B cell (primary cell): ENCODE measurements at regions of chr2 and their contacts with region 1.

Region 1: GRCh38 chr2:149597668-149598326 is 10.2 kb upstream of the MMADHC start:
- DNase-seq: peak; percentile 77
- ATAC-seq: peak; percentile 95
- H3K4me3 ChIP-seq: no peak overlapping the region
- H3K4me3 Mint-ChIP-seq: peak overlapping the region; percentile 24
- H3K27ac ChIP-seq: no peak overlapping the region
- H3K27ac Mint-ChIP-seq: no peak overlapping the region
- H3K4me1 ChIP-seq: peaks cover 4 to 5% of the 10 kb centered on the region in 2 donors
- H3K4me1 Mint-ChIP-seq: peaks cover 6% of the 10 kb centered on the region
- H3K27me3 ChIP-seq: peaks cover 0 to 5% (median 2%) of the 10 kb centered on the region in 4 experiments
- H3K27me3 Mint-ChIP-seq: peaks cover 22% of the 10 kb centered on the region
- CTCF ChIP-seq: peak; percentile 87

Region 2: GRCh38 chr2:149652526-149652925 is 54.7 kb after region 1 on chr2:
- CTCF ChIA-PET with region 1: no interaction called
- POLR2A ChIA-PET with region 1: no interaction called
- intact Hi-C with region 1: no loop called
- DNase-seq: no peak
- ATAC-seq: no peak
- H3K4me3 ChIP-seq: no peak overlapping the region
- H3K4me3 Mint-ChIP-seq: no peak overlapping the region
- H3K27ac ChIP-seq: no peak overlapping the region
- H3K27ac Mint-ChIP-seq: no peak overlapping the region
- H3K4me1 ChIP-seq: no peaks in the 10 kb centered on the region
- H3K4me1 Mint-ChIP-seq: no peaks in the 10 kb centered on the region
- H3K27me3 ChIP-seq: no peaks in the 10 kb centered on the region
- H3K27me3 Mint-ChIP-seq: no peaks in the 10 kb centered on the region
- CTCF ChIP-seq: no peak

Region 3: DNA sequence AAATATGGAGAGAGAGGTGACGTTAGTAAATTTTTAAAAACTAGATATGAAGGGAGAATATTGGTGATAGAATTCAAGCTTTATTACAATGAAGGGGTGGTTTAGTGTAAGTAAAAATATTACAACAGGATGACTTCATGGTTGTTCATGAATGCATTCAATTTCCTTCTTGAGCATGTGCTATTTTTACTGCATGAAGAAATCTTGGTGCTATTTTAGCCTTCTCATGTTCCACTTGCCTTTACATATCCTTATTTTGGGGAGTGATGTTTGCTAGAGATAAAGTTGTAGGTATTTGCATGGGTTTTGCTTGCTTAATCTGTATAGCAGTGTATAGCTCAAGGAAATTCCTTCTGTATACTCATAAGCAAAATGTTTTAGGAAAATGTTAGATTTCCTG is 184.8 kb after region 1 on chr2:
- CTCF ChIA-PET with region 1: no interaction called
- POLR2A ChIA-PET with region 1: no interaction called
- intact Hi-C with region 1: no loop called
- DNase-seq: no peak
- ATAC-seq: no peak
- H3K4me3 ChIP-seq: no peak overlapping the region
- H3K4me3 Mint-ChIP-seq: no peak overlapping the region
- H3K27ac ChIP-seq: no peak overlapping the region
- H3K27ac Mint-ChIP-seq: no peak overlapping the region
- H3K4me1 ChIP-seq: no peaks in the 10 kb centered on the region
- H3K4me1 Mint-ChIP-seq: no peaks in the 10 kb centered on the region
- H3K27me3 ChIP-seq: no peaks in the 10 kb centered on the region
- H3K27me3 Mint-ChIP-seq: no peaks in the 10 kb centered on the region
- CTCF ChIP-seq: no peak

Region 4: GRCh38 chr2:151051574-151052220 is 1453.9 kb after region 1 on chr2:
- CTCF ChIA-PET with region 1: interaction called, 78 read pairs
- POLR2A ChIA-PET with region 1: no interaction called
- intact Hi-C with region 1: no loop called
- DNase-seq: peak; percentile 42
- ATAC-seq: peak; percentile 64
- H3K4me3 ChIP-seq: no peak overlapping the region
- H3K4me3 Mint-ChIP-seq: no peak overlapping the region
- H3K27ac ChIP-seq: no peak overlapping the region
- H3K27ac Mint-ChIP-seq: no peak overlapping the region
- H3K4me1 ChIP-seq: no peaks in the 10 kb centered on the region
- H3K4me1 Mint-ChIP-seq: no peaks in the 10 kb centered on the region
- H3K27me3 ChIP-seq: no peaks in the 10 kb centered on the region
- H3K27me3 Mint-ChIP-seq: peaks cover 15% of the 10 kb centered on the region
- CTCF ChIP-seq: peak; percentile 95

Region 5: DNA sequence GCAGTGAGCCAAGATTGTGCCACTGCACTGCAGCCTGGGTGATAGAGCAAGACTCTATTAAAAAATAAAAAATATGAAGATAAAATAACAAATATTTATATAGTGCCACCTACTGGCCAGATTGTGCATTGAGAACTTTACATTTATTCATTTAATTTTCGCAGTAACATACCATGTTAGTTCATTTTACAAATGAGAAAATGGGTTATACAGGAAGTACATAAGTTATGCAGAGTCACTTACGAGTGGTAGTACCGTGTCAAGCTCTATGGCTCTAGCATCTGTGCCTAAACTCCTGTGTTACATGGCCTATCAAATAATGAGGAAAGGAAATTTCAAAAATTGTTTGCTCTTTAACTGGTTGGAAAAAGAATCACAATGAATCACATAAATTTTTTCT is 1839.8 kb after region 1 on chr2:
- CTCF ChIA-PET with region 1: interaction called, 3 read pairs
- POLR2A ChIA-PET with region 1: no interaction called
- intact Hi-C with region 1: loop called (anchors 1 kb)
- DNase-seq: peak; percentile 44
- ATAC-seq: peak; percentile 28
- H3K4me3 ChIP-seq: no peak overlapping the region
- H3K4me3 Mint-ChIP-seq: no peak overlapping the region
- H3K27ac ChIP-seq: no peak overlapping the region
- H3K27ac Mint-ChIP-seq: peak overlapping the region; percentile 1
- H3K4me1 ChIP-seq: no peaks in the 10 kb centered on the region
- H3K4me1 Mint-ChIP-seq: no peaks in the 10 kb centered on the region
- H3K27me3 ChIP-seq: no peaks in the 10 kb centered on the region
- H3K27me3 Mint-ChIP-seq: no peaks in the 10 kb centered on the region
- CTCF ChIP-seq: peak; percentile 86